Activated B cell treated with CpG ODN at 0.5 μM for 24 hours (primary cell): ENCODE measurements at regions of chr5 and their contacts with region 1.

Region 1: GRCh38 chr5:82225525-82226172 is 52.5 kb downstream of the RPS23 start:
- DNase-seq: peak; percentile 33
- ATAC-seq: peak; percentile 89
- H3K4me3 Mint-ChIP-seq: no peak overlapping the region
- H3K27ac Mint-ChIP-seq: no peak overlapping the region
- H3K4me1 Mint-ChIP-seq: peaks cover 3% of the 10 kb centered on the region
- H3K27me3 Mint-ChIP-seq: no peaks in the 10 kb centered on the region
- CTCF ChIP-seq: peak; percentile 60

Region 2: DNA sequence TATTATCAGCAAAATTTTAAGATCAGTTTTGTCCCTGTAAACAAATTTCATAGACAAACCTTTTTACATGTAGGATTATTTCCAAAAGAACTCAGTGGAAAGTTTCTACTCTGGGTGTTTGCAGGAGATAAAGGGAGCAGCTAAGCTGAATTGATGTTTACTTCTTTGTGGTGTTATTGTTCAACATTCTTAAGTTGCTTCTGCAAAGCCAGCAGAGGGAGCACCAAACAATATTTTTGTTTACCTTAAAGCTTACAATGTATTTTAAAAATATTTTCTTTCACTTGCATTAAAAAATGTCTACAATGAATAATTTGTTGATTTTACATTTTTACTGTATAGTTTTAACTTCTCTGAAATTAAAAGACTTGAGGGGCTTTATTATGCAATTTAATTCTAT is 118.4 kb before region 1 on chr5:
- CTCF ChIA-PET with region 1: interaction called, 7 read pairs
- POLR2A ChIA-PET with region 1: no interaction called
- intact Hi-C with region 1: loop called (anchors 1 kb)
- DNase-seq: no peak
- ATAC-seq: no peak
- H3K4me3 Mint-ChIP-seq: no peak overlapping the region
- H3K27ac Mint-ChIP-seq: no peak overlapping the region
- H3K4me1 Mint-ChIP-seq: peaks cover 2% of the 10 kb centered on the region
- H3K27me3 Mint-ChIP-seq: no peaks in the 10 kb centered on the region
- CTCF ChIP-seq: no peak

Region 3: DNA sequence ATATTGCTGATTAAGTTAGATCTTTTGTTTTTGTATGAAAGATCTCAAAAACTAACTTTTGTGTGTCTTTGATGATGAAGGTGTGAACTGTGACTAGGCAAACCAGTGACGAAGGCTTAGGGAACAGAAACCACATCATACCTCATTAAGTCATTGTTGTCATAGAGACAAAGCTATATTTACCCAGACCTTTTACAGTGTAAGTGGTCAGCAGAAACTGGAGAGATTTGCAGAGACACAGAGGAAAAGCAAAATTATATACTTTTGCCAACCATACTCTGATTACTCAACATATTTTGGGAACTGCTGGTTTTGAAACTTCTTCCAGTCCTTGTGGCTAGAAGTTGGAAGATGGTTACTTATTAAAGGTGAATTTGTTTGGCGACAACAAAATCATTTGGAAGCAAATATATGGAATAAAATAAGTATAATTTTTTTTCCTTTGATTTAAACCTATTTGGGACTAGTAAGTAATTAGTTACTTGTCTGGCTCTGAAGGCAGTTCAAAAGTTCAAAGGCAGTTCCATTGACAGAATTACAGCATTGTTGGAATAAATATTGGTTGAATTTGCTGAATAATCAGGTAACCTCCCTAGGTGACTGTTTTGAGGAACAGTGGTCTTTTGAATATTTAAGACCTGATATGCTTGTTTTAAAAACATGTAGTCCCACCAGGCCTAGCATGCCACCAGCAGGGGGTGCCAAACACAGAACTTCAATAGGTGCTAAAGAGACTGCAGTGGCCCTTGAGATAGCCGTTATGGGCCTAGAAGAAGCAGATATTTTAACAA is 51.3 kb before region 1 on chr5:
- CTCF ChIA-PET with region 1: interaction called, 4 read pairs
- POLR2A ChIA-PET with region 1: no interaction called
- intact Hi-C with region 1: loop called (anchors 1 kb)
- DNase-seq: peak; percentile 46
- ATAC-seq: peak; percentile 89
- H3K4me3 Mint-ChIP-seq: peak overlapping the region; percentile 12
- H3K27ac Mint-ChIP-seq: peak overlapping the region; percentile 69
- H3K4me1 Mint-ChIP-seq: peaks cover 20% of the 10 kb centered on the region
- H3K27me3 Mint-ChIP-seq: no peaks in the 10 kb centered on the region
- CTCF ChIP-seq: no peak